ENCODE measurements at regions of chr9 and their contacts with region 1.

Region 1: DNA sequence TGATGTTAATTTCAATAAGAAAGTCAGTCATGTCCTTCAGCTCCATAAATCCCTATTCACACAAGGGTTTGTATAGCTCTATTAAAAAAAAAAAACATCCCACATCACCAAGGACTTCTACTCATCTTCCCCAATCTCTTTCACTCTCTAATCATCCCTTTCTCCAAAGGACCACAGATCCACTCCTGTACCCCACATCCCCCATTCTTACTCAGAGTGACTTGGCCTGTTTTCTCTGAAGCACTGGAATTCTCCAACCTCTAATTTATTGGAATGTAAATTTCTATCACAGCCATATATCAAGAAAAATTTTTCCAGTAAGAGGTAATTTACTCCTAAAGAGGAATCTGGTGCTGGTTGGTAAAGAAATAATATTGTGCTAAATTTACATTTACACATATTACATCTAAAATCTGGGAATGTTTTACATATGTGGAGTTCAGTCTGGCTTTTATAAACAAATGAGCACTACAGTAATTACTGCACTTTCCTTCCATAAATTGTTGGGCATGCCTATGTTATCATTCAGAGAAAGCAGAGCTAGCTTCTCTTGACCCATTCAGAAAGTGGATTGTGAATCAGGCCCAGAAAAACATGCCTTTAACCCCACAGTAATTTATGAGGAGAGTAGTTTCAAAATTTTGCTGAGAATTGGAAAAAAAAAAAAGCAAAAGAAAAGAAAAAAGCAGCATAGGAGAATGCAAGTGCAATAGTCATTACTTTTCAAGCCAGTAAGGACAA is 399.5 kb upstream of the TNC start:
- DNase-seq: no peak
- H3K4me3 ChIP-seq: no peak overlapping the region
- H3K27ac ChIP-seq: no peak overlapping the region
- H3K4me1 ChIP-seq: peaks cover 0 to 24% (median 19%) of the 10 kb centered on the region in 4 donors
- H3K27me3 ChIP-seq: no peaks in the 10 kb centered on the region
- CTCF ChIP-seq: no peak
- EP300 ChIP-seq: no peak
- POLR2A ChIP-seq: no peak

Region 2: DNA sequence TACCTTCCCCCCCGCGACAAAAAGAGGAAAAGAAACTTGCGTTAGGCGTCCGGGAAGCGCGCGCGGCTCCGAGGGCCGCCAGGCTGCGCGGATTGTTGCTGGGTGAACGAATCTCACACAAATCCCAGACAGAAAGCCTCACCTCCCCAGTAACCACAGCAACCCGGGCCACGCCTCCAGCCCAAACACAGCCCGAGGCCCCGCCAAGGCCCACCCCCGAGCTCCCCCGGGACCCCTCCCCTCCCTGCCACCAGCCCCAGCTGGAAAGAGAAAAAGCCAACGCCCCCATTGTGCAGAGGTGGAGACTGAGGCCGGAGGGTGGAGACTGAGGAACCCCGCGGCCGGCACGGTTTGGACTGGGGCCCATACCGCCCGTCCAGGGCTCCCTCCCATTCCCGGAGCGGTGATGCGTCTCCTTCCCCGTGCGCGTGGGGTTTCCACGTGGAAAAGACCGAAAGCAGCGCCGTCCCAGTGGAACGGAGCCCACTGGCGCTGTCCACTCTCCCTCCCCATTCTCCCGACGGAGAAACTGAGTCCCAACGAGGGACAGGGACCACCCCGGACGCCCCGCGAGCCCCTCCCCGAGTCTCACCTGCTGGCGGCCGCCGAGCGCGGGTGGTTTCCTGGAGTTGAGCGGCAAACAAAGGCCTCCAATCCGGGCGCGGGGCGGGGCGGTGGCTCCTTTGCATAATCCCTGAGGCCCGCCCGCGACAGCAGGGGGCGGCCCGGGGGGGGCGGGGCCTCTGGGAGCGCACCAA is 1119.5 kb before region 1 on chr9:
- intact Hi-C with region 1: loop called (anchors 5 kb)
- DNase-seq: peak; percentile 99
- H3K4me3 ChIP-seq: peak overlapping the region; percentile 65 to 81 (median 78)
- H3K27ac ChIP-seq: peak overlapping the region; percentile 81 to 86 (median 84)
- H3K4me1 ChIP-seq: peaks cover 0 to 34% (median 26%) of the 10 kb centered on the region in 4 donors
- H3K27me3 ChIP-seq: no peaks in the 10 kb centered on the region
- CTCF ChIP-seq: no peak
- EP300 ChIP-seq: peak in 1 of 4 donors; percentile 53
- POLR2A ChIP-seq: peak; percentile 36 to 49

Measured in sigmoid colon (tissue), 7 donors.